ENCODE measurements at regions of chr17 and their contacts with region 1.

Region 1: GRCh38 chr17:16521070-16521727 is 29.2 kb upstream of the LRRC75A start:
- DNase-seq: peak; percentile 41 to 95 (median 74)

Region 2: GRCh38 chr17:16232391-16232790 is 288.8 kb before region 1 on chr17:
- intact Hi-C with region 1: no loop called
- DNase-seq: no peak

Region 3: GRCh38 chr17:16363749-16364536 is 157.3 kb before region 1 on chr17:
- intact Hi-C with region 1: loop called (anchors 1 kb)
- DNase-seq: peak; percentile 50 to 96 (median 82)

Region 4: DNA sequence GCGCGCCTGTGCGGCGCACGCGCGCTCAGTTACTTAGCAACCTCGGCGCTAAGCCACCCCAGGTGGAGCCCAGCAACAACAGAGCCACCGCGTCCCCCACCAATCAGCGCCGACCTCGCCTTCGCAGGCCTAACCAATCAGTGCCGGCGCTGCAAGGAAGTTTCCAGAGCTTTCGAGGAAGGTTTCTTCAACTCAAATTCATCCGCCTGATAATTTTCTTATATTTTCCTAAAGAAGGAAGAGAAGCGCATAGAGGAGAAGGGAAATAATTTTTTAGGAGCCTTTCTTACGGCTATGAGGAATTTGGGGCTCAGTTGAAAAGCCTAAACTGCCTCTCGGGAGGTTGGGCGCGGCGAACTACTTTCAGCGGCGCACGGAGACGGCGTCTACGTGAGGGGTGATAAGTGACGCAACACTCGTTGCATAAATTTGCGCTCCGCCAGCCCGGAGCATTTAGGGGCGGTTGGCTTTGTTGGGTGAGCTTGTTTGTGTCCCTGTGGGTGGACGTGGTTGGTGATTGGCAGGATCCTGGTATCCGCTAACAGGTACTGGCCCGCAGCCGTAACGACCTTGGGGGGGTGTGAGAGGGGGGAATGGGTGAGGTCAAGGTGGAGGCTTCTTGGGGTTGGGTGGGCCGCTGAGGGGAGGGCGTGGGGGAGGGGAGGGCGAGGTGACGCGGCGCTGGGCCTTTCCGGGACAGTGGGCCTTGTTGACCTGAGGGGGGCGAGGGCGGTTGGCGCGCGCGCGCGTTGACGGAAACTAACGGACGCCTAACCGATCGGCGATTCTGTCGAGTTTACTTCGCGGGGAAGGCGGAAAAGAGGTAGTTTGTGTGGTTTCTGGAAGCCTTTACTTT is 140.3 kb before region 1 on chr17 and contains the start of gene UBB:
- intact Hi-C with region 1: loop called (anchors 1 kb)
- DNase-seq: peak; percentile 91 to 99 (median 94)

Region 5: DNA sequence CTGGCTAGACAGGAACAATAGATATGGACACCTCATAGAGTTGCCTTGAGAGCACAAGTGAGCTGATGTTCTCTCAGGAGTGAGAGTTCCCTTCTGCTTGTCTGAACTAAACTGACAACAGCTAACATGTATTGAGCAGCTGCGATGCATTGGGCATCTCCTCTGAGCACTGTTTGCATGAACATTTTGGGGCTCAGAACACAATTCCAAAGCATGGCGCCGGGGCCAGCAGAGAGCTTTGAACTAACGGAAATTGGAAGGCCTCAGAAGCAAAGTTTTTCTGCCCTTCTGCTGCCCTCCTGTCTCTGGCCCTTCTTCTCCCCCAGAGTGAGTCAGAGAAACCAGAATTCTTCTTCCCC is 67.7 kb before region 1 on chr17:
- intact Hi-C with region 1: loop called (anchors 1 kb)
- DNase-seq: peak in 1 of 10 donors; percentile 50

Region 6: GRCh38 chr17:16568541-16569357 is 47.5 kb after region 1 on chr17 and contains the start of gene ZNF287:
- intact Hi-C with region 1: no loop called
- DNase-seq: peak; percentile 92 to 99 (median 96)

Measured in posterior cingulate gyrus (tissue), 11 donors.